ENCODE measurements at regions of chr7 and their contacts with region 1.

Region 1: DNA sequence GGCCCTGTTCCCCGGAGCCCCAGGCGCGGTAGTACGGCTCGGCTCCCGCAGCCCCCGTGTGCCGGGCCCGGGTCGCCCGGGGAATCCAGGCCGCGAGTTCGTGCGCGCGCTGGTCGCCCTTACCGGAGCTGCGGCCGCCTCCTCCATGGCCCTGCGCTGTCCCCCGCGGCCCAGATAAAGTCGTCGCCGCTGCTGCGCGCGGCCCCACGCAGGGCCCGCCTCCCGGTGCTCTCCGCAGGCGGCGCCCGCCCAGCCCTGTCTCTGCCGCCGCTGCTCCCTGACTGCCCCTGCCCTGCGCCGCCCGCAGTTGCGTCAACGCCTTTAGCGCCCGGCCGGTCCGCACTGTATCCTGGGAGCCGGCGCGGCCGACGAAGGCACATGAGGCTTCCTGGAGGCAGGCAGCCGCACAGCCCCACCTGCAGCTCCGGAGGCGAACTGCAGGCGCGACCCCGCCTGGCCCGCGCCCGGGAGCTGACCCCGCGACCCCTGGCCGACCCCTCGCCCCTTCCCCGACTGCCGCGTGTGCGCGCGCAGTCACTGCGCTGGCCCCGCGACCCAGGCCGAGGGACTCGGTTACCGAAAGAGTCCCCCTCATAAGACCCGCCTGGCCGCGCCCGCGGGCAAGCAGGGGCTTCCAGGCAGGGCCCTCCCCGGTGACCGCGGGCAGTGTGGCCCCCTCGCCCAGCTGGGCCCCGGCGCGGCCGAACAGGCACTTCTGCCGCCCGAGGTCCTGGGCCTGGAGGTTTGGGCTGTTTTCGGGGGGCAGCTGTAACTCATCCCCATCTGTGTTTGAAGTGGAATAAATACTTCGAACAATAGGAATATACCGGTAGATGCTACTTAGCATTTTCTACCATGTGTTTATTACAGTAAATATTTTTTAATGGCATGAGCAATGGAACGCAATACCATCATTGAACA is 127.1 kb upstream of the ZNF746 start:
- DNase-seq: peak; percentile 39
- H3K4me3 ChIP-seq: peak overlapping the region; percentile 59
- H3K27me3 ChIP-seq: 0 out of 2 replicates have a peak, but pooled peaks cover 2% of the 10 kb centered on the region
- CTCF ChIP-seq: peak; percentile 75

Region 2: DNA sequence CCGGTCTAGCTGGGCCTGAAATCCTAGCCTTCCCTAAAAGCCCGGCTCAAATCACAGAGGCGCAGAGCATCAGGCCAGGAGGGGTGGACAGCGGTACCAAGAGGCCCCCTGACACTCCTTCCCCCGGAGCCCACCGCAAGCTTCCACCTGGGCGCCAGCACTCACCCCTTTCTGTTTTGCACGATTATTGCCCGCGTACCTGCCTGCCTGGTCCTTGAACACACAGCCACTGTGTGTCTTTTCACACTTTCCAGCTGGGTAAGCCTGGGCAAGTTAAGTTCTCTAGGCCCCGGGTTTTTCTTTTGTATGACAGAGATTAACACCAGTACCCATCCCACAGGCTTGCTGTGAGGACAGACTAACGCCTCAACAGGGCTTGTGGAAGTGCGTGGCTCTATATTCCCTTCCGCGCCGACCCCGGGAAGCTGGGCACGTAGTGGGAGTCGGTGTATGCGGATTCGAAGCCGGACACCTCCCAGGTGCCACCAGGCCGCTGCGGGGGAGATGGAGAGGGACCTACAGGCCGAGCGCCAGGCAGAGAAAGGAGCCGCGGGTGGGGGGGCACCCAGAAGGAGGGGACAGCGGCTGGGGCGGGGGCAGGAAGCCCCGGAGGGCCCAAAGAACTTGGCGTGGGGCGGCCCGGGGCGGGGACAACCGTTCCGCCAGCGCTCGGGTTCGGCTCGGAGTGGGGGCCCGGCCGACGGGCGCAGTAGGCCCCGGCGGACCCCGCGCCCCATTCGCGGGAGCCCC is 127.9 kb before region 1 on chr7:
- CTCF ChIA-PET with region 1: interaction called, 11 read pairs
- POLR2A ChIA-PET with region 1: interaction called, 3 read pairs
- DNase-seq: no peak
- H3K4me3 ChIP-seq: peak overlapping the region; percentile 61
- H3K27me3 ChIP-seq: peaks cover 6% of the 10 kb centered on the region
- CTCF ChIP-seq: no peak

Region 3: GRCh38 chr7:149642589-149642988 is 17.9 kb after region 1 on chr7:
- CTCF ChIA-PET with region 1: interaction called, 11 read pairs
- POLR2A ChIA-PET with region 1: no interaction called
- DNase-seq: no peak
- H3K4me3 ChIP-seq: no peak overlapping the region
- H3K27me3 ChIP-seq: no peaks in the 10 kb centered on the region; the same call in 1 of the 2 replicates
- CTCF ChIP-seq: no peak

Region 4: GRCh38 chr7:149696280-149696679 is 71.6 kb after region 1 on chr7:
- CTCF ChIA-PET with region 1: no interaction called
- POLR2A ChIA-PET with region 1: no interaction called
- DNase-seq: no peak
- H3K4me3 ChIP-seq: no peak overlapping the region
- H3K27me3 ChIP-seq: peaks cover 6% of the 10 kb centered on the region; the same call in 1 of the 2 replicates
- CTCF ChIP-seq: no peak

Region 5: GRCh38 chr7:149716007-149716945 is 91.6 kb after region 1 on chr7:
- CTCF ChIA-PET with region 1: interaction called, 15 read pairs
- POLR2A ChIA-PET with region 1: interaction called, 3 read pairs
- DNase-seq: no peak
- H3K4me3 ChIP-seq: peak overlapping the region; percentile 81
- H3K27me3 ChIP-seq: no peaks in the 10 kb centered on the region
- CTCF ChIP-seq: 0 out of 2 replicates have a peak, but pooled peaks have one; percentile 26

Measured in BJ (cell line).